OCI-LY7 (cell line): ENCODE measurements at regions of chr4 and their contacts with region 1.

Region 1: GRCh38 chr4:118684873-118685811 is at the start of gene METTL14:
- DNase-seq: peak; percentile 93
- H3K4me3 ChIP-seq: peak within 1 kb of the TSS; percentile 91
- H3K27ac ChIP-seq: peak within 1 kb of the TSS; percentile 10
- H3K4me1 ChIP-seq: peaks cover 24% of the 10 kb centered on the region
- CTCF ChIP-seq: 0 out of 2 replicates have a peak, but pooled peaks have one; percentile 17
- total RNA-seq, gene METTL14: 17.5 and 36.2 TPM in 2 replicates

Region 2: GRCh38 chr4:118586357-118586790 is 98.8 kb before region 1 on chr4:
- CTCF ChIA-PET with region 1: no interaction called
- POLR2A ChIA-PET with region 1: interaction called, 3 read pairs
- intact Hi-C with region 1: loop called (anchors 2 kb)
- DNase-seq: no peak
- H3K4me3 ChIP-seq: no peak overlapping the region
- H3K27ac ChIP-seq: no peak overlapping the region
- H3K4me1 ChIP-seq: peaks cover 27% of the 10 kb centered on the region
- CTCF ChIP-seq: no peak

Region 3: GRCh38 chr4:118765399-118765798 is 80.3 kb after region 1 on chr4:
- CTCF ChIA-PET with region 1: no interaction called
- POLR2A ChIA-PET with region 1: no interaction called
- intact Hi-C with region 1: loop called (anchors 2 kb)
- DNase-seq: no peak
- H3K4me3 ChIP-seq: no peak overlapping the region
- H3K27ac ChIP-seq: no peak overlapping the region
- H3K4me1 ChIP-seq: peaks cover 37% of the 10 kb centered on the region
- CTCF ChIP-seq: no peak